ENCODE measurements at regions of chr17 and their contacts with region 1.

Region 1: GRCh38 chr17:56819431-56820145 is 14.1 kb downstream of the C17orf67 start:
- DNase-seq: peak; percentile 85
- ATAC-seq: peak; percentile 93
- H3K4me3 Mint-ChIP-seq: no peak overlapping the region
- H3K27ac Mint-ChIP-seq: no peak overlapping the region
- H3K4me1 Mint-ChIP-seq: peaks cover 10% of the 10 kb centered on the region
- H3K27me3 Mint-ChIP-seq: no peaks in the 10 kb centered on the region; the same call in 1 of the 2 replicates
- CTCF ChIP-seq: peak; percentile 79

Region 2: DNA sequence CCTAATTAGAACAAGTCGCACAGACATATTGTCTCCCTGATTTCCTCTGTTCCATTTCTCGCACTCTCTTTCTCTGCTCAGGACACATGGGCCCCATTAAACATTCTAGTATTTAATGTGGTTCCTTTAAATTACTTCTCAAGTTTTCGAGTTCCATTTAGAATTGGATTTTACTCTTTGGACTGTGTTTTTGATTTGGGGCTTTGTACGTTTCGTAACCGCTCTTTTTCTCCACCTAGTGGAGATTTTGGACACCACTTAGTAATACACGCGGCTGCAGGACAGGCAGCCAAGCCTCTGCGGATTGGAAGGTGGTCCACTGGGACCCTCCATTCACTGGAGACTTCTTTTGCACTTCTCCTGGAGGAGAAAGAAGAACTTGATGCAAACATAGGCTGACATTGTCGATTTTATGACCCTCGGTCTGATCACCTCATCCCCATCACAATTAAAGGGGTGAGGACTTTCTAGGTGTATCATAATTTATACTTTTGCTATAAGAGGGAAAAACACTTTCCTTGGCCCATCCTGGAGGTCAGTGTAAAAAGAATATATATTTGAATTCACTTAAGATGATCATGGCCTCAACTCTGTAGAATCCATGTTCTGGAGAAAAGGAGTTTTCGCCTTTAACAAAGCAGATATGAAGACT is 140.3 kb before region 1 on chr17:
- CTCF ChIA-PET with region 1: interaction called, 11 read pairs
- POLR2A ChIA-PET with region 1: no interaction called
- DNase-seq: no peak
- ATAC-seq: peak; percentile 75
- H3K4me3 Mint-ChIP-seq: peak overlapping the region; percentile 85
- H3K27ac Mint-ChIP-seq: no peak overlapping the region
- H3K4me1 Mint-ChIP-seq: peaks cover 9% of the 10 kb centered on the region
- H3K27me3 Mint-ChIP-seq: no peaks in the 10 kb centered on the region; the same call in 1 of the 2 replicates
- CTCF ChIP-seq: peak; percentile 41; the same call in 1 of the 2 replicates

Region 3: DNA sequence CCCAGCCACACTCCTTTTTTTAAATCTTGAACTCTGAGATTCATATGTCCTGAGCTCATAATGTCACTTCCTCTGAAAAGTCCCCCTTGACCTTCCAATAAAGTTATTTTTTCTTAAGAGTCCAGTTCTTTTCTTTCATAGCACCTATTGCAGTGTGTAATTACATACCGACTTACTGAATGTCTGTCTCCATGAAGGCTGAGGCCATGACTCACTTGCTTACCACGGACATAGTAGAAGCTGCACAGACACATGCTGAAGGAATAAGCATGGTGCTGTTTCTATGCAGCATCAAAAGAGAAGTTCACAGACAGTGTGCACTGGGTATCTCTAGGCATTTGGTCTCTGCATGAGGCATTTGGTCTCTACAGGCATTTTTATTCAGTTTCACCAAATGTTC is 63.1 kb before region 1 on chr17:
- CTCF ChIA-PET with region 1: no interaction called
- POLR2A ChIA-PET with region 1: no interaction called
- DNase-seq: no peak
- ATAC-seq: no peak
- H3K4me3 Mint-ChIP-seq: no peak overlapping the region
- H3K27ac Mint-ChIP-seq: no peak overlapping the region
- H3K4me1 Mint-ChIP-seq: peaks cover 4% of the 10 kb centered on the region
- H3K27me3 Mint-ChIP-seq: no peaks in the 10 kb centered on the region
- CTCF ChIP-seq: no peak

Region 4: DNA sequence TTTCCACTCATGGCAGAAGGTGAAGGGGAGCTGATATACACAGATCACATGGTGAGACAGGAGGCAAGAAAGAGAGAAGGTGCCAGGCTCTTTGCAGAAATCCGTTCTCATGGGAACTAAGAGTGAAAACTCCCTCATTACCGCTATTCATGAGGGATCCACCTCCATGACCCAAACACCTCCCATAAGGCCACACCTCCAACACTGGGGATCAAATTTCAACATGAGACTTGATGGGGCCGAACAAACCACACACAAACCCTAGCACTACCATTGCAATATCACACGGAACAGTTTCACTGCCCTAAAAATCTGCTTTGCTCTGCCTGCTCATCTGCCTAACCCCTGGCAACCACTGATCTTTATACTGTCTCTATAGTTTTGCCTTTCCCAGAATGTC is 20.7 kb before region 1 on chr17:
- CTCF ChIA-PET with region 1: interaction called, 14 read pairs
- POLR2A ChIA-PET with region 1: no interaction called
- DNase-seq: peak; percentile 36
- ATAC-seq: peak; percentile 95
- H3K4me3 Mint-ChIP-seq: peak overlapping the region; percentile 29
- H3K27ac Mint-ChIP-seq: no peak overlapping the region
- H3K4me1 Mint-ChIP-seq: peaks cover 15% of the 10 kb centered on the region
- H3K27me3 Mint-ChIP-seq: no peaks in the 10 kb centered on the region
- CTCF ChIP-seq: no peak

Region 5: GRCh38 chr17:56833809-56834379 is 14.3 kb after region 1 on chr17 and contains the starts of genes C17orf67 and DGKE:
- CTCF ChIA-PET with region 1: interaction called, 36 read pairs
- POLR2A ChIA-PET with region 1: no interaction called
- DNase-seq: peak; percentile 98
- ATAC-seq: peak; percentile 92
- H3K4me3 Mint-ChIP-seq: peak within 1 kb of the TSS; percentile 83
- H3K27ac Mint-ChIP-seq: no peak within 1 kb of the TSS
- H3K4me1 Mint-ChIP-seq: peaks cover 54% of the 10 kb centered on the region
- H3K27me3 Mint-ChIP-seq: peaks cover 19% of the 10 kb centered on the region
- CTCF ChIP-seq: no peak
- total RNA-seq, gene C17orf67: 3.0 to 3.4 TPM (median 3.3 TPM) in 3 replicates
- total RNA-seq, gene DGKE: 8.5 to 9.4 TPM (median 9.3 TPM) in 3 replicates

Region 6: GRCh38 chr17:56939901-56940343 is 120.3 kb after region 1 on chr17:
- CTCF ChIA-PET with region 1: interaction called, 15 read pairs
- POLR2A ChIA-PET with region 1: no interaction called
- DNase-seq: peak; percentile 24
- ATAC-seq: peak; percentile 94
- H3K4me3 Mint-ChIP-seq: no peak overlapping the region
- H3K27ac Mint-ChIP-seq: no peak overlapping the region
- H3K4me1 Mint-ChIP-seq: no peaks in the 10 kb centered on the region; the same call in 1 of the 2 replicates
- H3K27me3 Mint-ChIP-seq: no peaks in the 10 kb centered on the region
- CTCF ChIP-seq: peak; percentile 61

Measured in WTC11 (cell line).